ENCODE measurements at regions of chr5 and their contacts with region 1.

Region 1: DNA sequence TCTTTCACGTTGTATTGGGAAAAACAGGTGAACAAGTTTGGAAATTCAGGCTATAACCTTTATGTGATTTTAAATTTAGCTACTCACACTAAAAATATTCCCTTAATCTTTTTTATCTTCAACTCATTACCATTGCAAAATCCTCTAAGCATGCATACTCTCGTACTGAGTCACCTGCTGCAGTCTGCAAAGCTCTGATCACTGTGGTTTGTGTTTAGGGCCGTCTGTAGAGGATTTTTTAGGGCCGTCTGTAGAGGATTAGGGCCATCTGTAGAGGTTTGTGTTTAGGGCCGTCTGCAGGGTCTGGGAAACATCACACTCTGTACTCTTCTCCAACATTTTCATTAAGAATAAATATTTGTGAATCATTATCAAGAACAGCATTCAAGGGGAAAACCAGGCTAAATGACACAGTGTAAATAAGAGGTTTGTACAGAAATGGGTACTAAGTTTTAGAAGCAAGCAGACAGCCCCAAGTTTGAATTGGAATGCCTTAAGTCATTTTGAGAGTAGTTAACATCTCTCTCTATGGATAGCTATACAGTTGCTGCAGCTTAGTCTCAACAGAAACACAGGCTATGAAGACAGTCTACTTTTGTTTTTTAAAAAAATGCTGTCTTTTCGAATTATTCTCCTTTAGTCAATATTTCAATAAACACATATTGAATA is 155.0 kb upstream of the TSLP start:
- DNase-seq: no peak
- ATAC-seq: peak; percentile 42 to 92 (median 84)
- H3K4me3 ChIP-seq: no peak overlapping the region
- H3K27ac ChIP-seq: peak overlapping the region in 9 of 10 donors; percentile 55 to 83 (median 72)
- H3K4me1 ChIP-seq: peaks cover 0 to 43% (median 9%) of the 10 kb centered on the region in 9 donors
- H3K27me3 ChIP-seq: no peaks in the 10 kb centered on the region
- CTCF ChIP-seq: no peak

Region 2: DNA sequence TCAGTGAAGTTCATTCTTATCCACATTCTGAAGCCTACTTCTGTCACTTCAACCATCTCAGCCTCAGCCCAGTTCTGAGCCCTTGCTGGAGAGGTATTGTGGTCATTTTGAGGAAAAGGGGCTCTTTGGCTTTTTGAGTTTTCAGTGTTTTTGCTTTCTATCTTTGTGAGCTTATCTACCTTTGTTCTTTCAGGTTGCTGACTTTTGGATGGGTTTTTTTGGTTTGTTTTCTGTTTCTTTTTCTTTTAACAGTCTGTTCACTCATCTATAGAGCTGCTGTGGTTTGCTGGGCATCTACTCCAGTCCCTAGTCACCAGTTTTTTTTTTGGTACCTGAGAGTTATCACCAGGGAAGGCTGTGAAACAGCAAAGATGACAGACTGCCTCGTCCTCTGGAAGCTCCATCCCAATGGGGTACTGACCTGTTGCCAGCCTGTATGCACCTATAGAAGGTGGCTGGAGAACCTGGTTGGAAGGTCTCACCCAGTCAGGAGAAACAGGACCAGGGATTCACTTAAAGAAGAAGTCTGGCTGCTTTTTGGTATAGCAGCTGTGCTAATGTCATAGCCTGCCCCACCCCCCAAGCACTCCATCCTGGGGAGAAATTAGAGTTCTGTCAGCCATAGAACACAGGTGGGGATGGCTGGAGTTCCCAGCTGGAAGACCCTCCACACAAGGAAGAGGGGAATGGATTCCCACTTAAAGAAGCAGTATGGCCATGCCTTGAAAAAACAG is 16.4 kb after region 1 on chr5:
- intact Hi-C with region 1: no loop called
- DNase-seq: no peak
- ATAC-seq: no peak
- H3K4me3 ChIP-seq: no peak overlapping the region
- H3K27ac ChIP-seq: no peak overlapping the region
- H3K4me1 ChIP-seq: no peaks in the 10 kb centered on the region
- H3K27me3 ChIP-seq: no peaks in the 10 kb centered on the region
- CTCF ChIP-seq: no peak

Region 3: GRCh38 chr5:111004286-111004685 is 87.8 kb after region 1 on chr5:
- intact Hi-C with region 1: loop called in 1 of 10 experiments (anchors 1 kb)
- DNase-seq: no peak
- ATAC-seq: no peak
- H3K4me3 ChIP-seq: no peak overlapping the region
- H3K27ac ChIP-seq: no peak overlapping the region
- H3K4me1 ChIP-seq: no peaks in the 10 kb centered on the region
- H3K27me3 ChIP-seq: no peaks in the 10 kb centered on the region
- CTCF ChIP-seq: no peak

Region 4: DNA sequence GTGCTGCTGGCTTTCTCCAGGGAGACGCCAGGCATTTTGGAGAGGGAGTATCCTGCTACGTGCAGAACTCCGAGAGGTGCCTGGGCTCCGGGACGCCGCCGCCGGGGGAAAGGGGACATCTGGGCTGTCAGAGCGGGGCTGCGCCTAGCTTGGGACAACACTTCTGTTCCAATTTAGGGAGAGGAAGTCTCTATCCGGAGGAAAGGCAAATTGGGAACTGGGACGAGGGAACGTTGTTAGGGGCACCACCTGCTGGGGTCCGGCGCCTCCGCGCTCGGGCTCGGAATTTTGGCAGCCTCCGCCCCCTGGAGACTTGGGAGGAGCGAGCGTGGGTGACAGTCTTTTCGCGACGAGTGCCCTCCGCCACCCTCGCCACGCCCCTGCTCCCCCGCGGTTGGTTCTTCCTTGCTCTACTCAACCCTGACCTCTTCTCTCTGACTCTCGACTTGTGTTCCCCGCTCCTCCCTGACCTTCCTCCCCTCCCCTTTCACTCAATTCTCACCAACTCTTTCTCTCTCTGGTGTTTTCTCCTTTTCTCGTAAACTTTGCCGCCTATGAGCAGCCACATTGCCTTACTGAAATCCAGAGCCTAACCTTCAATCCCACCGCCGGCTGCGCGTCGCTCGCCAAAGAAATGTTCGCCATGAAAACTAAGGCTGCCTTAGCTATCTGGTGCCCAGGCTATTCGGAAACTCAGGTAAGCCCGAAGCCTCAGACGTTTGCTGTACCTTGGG is 156.6 kb after region 1 on chr5:
- intact Hi-C with region 1: loop called in 1 of 10 experiments (anchors 10 kb)
- DNase-seq: peak; percentile 62 to 76
- ATAC-seq: peak; percentile 82 to 97 (median 94)
- H3K4me3 ChIP-seq: peak overlapping the region; percentile 20 to 61 (median 54)
- H3K27ac ChIP-seq: peak overlapping the region in 7 of 10 donors; percentile 21 to 62 (median 44)
- H3K4me1 ChIP-seq: peaks cover 0 to 37% (median 8%) of the 10 kb centered on the region in 9 donors
- H3K27me3 ChIP-seq: peaks cover 0 to 58% (median 21%) of the 10 kb centered on the region in 7 donors
- CTCF ChIP-seq: peak in 2 of 9 donors; percentile 36 to 45

Measured in heart right ventricle (tissue), 16 donors.